ENCODE measurements at regions of chr7 and their contacts with region 1.

Region 1: DNA sequence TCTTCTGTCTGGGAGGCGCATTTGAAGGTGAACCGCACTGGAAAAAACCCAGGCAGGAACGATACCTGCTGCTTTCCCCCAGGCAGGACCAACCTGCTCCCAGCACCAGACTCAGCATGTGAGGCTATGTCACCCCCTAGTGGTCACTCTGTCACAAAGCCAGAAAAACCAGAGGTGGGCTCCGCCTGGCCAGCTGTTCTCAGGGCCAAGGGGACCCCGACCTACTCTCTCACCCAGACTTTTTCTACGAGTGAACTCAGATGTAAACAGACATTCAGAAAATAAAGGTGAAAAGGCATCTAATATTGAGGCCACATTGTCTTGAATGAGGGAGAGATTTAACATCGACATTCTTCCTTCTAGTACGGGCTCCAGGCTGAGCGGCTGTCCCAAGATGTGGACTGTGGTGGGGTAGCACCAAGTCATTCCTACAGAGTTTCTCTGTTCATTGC is 117.3 kb downstream of the PRKAG2 start:
- DNase-seq: no peak
- H3K4me3 ChIP-seq: no peak overlapping the region
- H3K27ac ChIP-seq: no peak overlapping the region
- H3K27me3 ChIP-seq: peaks cover 33% of the 10 kb centered on the region
- CTCF ChIP-seq: peak; percentile 89

Region 2: DNA sequence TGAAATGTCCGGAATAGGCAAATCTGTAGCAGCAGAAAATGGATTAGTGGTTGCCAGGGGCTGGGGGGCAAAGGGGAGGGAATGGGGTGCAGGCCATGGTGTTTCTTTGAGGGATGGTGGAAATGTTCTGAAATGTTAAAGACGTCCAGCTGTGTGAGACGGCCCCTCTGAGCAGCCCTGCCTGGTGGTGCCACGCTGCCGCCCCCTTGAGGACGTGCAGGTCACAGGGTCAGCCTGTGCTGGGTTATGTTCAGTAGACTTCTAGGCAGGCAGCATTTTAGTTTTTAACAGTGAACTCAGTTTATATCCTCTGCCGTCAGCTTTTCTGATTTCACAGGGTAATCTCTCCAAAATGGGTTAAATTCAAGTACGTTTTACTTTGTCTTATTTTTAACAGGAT is 408.6 kb before region 1 on chr7:
- CTCF ChIA-PET with region 1: interaction called, 11 read pairs
- POLR2A ChIA-PET with region 1: no interaction called
- DNase-seq: no peak
- H3K4me3 ChIP-seq: no peak overlapping the region
- H3K27ac ChIP-seq: no peak overlapping the region
- H3K27me3 ChIP-seq: no peaks in the 10 kb centered on the region
- CTCF ChIP-seq: no peak; the same call in 1 of the 2 replicates

Region 3: GRCh38 chr7:151368136-151368571 is 391.5 kb before region 1 on chr7:
- CTCF ChIA-PET with region 1: interaction called, 15 read pairs
- POLR2A ChIA-PET with region 1: no interaction called
- DNase-seq: peak; percentile 39
- H3K4me3 ChIP-seq: no peak overlapping the region
- H3K27ac ChIP-seq: no peak overlapping the region
- H3K27me3 ChIP-seq: no peaks in the 10 kb centered on the region
- CTCF ChIP-seq: peak; percentile 97

Region 4: GRCh38 chr7:151459726-151460473 is 299.7 kb before region 1 on chr7:
- CTCF ChIA-PET with region 1: interaction called, 15 read pairs
- POLR2A ChIA-PET with region 1: interaction called, 3 read pairs
- DNase-seq: peak; percentile 72
- H3K4me3 ChIP-seq: peak overlapping the region; percentile 39
- H3K27ac ChIP-seq: peak overlapping the region; percentile 86
- H3K27me3 ChIP-seq: no peaks in the 10 kb centered on the region
- CTCF ChIP-seq: peak; percentile 53

Region 5: GRCh38 chr7:151570366-151570915 is 189.2 kb before region 1 on chr7:
- CTCF ChIA-PET with region 1: interaction called, 41 read pairs
- POLR2A ChIA-PET with region 1: no interaction called
- DNase-seq: no peak
- H3K4me3 ChIP-seq: no peak overlapping the region
- H3K27ac ChIP-seq: no peak overlapping the region
- H3K27me3 ChIP-seq: no peaks in the 10 kb centered on the region
- CTCF ChIP-seq: peak; percentile 65

Region 6: GRCh38 chr7:151631968-151632749 is 127.5 kb before region 1 on chr7:
- CTCF ChIA-PET with region 1: interaction called, 37 read pairs
- POLR2A ChIA-PET with region 1: interaction called, 3 read pairs
- DNase-seq: peak; percentile 21
- H3K4me3 ChIP-seq: peak overlapping the region; percentile 84
- H3K27ac ChIP-seq: no peak overlapping the region
- H3K27me3 ChIP-seq: no peaks in the 10 kb centered on the region
- CTCF ChIP-seq: 0 out of 2 replicates have a peak, but pooled peaks have one; percentile 21

Region 7: DNA sequence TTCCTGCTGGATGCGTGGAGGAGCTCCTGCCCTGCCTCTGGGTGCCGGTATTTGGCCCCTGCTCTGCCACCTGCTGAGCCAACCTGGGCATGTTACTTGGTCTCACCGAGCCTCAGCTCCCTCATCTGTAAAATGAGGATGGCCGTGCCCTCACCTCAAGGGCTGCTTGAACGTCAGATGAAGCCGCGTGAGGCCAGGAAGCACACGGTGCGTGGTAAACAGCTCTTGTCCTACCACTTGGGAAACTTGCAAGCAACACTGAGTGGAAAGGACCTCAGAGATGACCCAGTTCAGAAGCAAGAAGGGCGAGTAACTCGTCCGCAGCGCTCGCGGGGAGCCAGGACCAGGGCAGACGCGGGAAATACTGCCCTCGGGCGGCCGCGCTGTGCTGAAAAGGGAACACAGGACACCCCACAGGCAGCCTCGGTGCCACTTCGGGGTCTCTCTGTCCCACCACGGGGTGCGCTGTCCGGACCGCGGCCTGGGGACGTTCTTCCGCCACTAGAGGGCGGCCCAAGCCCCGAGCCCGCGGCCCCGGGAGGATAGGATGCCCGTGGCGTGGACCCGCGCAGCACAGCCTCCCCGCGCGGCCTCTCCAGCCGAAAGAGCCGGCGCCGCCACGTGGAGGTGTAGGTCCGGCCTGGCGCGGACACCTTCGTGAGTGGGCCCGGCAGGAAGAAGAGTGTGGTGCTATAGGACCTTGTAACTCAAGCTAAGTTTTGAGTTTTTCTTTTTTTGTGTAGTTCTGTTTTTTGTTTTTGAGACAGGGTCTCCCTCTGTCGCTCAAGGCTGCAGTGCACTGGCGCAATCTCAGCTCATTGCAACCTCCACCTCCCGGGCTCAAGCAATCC is 23.2 kb after region 1 on chr7:
- CTCF ChIA-PET with region 1: interaction called, 13 read pairs
- POLR2A ChIA-PET with region 1: no interaction called
- DNase-seq: peak; percentile 11
- H3K4me3 ChIP-seq: peak overlapping the region; percentile 45
- H3K27ac ChIP-seq: no peak overlapping the region
- H3K27me3 ChIP-seq: peaks cover 40% of the 10 kb centered on the region
- CTCF ChIP-seq: peak; percentile 85

Region 8: GRCh38 chr7:151925446-151926335 is 166.1 kb after region 1 on chr7:
- CTCF ChIA-PET with region 1: no interaction called
- POLR2A ChIA-PET with region 1: no interaction called
- DNase-seq: no peak
- H3K4me3 ChIP-seq: no peak overlapping the region
- H3K27ac ChIP-seq: no peak overlapping the region
- H3K27me3 ChIP-seq: peaks cover 4% of the 10 kb centered on the region
- CTCF ChIP-seq: no peak